ENCODE measurements at regions of chr15 and their contacts with region 1.

Region 1: DNA sequence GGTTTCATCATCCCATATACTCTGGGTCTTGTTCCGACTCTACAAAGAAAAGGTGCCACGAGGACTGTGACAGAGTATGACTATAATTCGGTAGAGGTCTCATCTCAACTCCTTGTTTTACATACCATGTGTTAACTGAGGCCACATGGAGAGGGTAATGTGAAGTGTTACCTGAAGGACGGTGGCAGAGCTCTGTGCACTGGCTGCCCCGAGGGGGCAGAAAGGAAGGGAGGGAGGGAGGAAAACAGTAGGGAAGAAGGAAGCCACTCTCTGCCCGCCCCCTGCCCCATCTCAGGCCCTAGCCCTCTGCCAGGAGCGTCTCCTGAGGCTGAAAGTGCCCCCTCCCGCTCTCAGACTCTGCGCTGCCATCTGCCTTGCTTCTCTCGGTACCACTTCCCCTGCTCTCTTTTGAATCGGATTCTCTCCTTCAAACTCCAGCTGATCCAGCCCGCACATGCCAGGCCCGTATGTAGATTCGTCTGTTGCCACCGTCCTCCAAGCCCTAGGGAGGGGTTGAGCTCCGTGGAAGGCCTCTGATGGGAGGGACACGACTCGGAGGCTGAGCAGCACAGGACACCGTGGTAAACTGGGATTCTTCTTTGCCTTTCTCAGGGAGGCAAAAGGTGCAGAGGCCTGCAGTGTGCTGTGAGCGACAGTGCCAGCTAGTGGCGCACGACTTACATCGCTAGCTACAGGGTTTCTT is 70.5 kb upstream of the ATP10A start:
- DNase-seq: peak in 2 of 3 donors; percentile 70 to 73
- ATAC-seq: peak; percentile 81
- H3K4me3 ChIP-seq: no peak overlapping the region
- H3K4me1 ChIP-seq: no peaks in the 10 kb centered on the region
- CTCF ChIP-seq: peak; percentile 24

Region 2: DNA sequence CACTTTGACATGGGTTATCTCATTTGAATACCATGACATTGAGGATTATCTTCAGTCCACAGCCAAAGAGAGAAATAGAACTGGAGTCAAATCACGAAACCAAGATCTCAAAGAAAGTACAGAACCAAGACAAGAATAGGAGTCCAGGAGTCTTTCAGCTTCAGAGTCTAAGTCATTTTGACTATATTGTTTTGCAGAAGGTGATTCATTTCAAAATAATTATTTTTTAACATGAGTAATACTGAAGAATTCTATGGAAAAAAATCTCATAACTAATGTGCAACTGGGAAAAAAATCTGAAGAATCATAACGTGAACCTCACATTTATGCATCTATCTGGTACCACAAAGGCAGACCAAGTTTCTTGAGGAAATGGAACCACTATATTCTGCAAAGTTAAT is 555.1 kb before region 1 on chr15:
- intact Hi-C with region 1: no loop called
- DNase-seq: no peak
- ATAC-seq: no peak
- H3K4me3 ChIP-seq: no peak overlapping the region
- H3K4me1 ChIP-seq: no peaks in the 10 kb centered on the region
- CTCF ChIP-seq: no peak

Region 3: DNA sequence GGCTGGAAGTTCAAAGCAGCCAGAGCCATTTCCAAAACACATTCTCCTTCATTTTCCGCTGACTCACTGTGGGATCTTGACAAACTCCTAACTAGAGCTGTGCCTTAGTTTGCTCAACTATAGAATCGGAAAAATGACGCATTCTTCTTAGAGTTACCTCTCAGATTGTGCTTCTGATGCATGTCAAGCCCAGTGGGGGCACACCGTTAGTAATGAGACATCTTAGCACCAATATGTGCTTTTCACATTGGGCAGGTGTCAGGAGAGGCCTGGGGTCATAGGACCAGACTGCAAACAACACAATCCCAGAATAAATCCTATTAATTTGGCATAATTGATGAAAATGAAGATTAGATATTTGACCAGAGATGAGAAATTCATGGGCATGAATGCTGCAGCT is 423.5 kb before region 1 on chr15:
- intact Hi-C with region 1: loop called in 1 of 2 experiments (anchors 10 kb)
- DNase-seq: no peak
- ATAC-seq: no peak
- H3K4me3 ChIP-seq: no peak overlapping the region
- H3K4me1 ChIP-seq: no peaks in the 10 kb centered on the region
- CTCF ChIP-seq: no peak

Region 4: DNA sequence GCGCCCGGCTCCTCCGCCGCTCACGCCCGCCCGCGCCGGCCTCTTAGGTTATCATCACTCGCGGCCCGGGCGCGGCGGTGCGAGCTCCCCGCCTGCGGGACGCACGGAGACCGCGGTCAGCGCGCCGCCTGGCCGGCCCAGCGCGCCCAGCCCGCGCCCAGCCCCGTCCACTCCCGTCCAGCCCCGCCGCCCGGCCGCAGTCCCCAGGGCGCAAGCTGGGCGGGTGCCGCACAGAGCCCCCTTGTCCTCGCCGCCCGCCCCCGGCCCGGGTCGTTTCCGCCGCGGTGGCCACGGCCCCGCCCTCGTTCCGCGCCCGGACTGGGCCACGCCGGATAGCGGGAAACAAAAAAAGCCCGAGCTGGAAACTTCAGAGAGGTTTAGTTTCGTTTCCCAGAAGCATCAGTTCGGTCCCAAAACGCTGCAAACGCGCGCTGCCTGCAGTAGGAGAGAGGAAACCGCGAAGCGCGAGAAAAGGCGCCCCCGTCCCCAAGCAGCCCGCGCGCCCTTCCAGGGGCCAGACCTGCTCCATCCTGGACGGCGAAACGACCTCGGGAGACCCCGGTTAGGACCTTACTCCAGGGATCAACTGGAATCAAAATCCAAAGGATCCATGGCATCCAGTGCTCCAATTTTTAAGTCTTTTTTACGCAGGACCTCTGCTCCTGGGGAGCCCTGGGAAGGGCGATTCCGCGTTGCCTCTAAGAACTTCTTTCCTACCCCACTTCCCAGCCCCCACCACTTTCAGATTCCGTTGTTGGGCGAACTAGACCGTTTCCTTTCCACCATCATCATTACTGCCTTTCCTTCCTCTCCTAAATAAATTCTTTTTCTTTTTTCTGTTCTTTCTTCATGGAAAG is 70.3 kb before region 1 on chr15 and contains the start of gene ATP10A:
- intact Hi-C with region 1: no loop called
- DNase-seq: peak; percentile 37 to 55 (median 54)
- ATAC-seq: peak; percentile 4
- H3K4me3 ChIP-seq: peak within 1 kb of the TSS; percentile 22
- H3K4me1 ChIP-seq: no peaks in the 10 kb centered on the region
- CTCF ChIP-seq: no peak
- total RNA-seq, gene ATP10A: 2.4 to 4.5 (median 2.7) TPM

Measured in mucosa of descending colon (tissue), 3 donors.